Endothelial cell of umbilical vein (primary cell): ENCODE measurements at regions of chr10 and their contacts with region 1.

Region 1: GRCh38 chr10:102583435-102584417 is 60.6 kb upstream of the TRIM8 start:
- DNase-seq: peak; percentile 86
- H3K4me3 ChIP-seq: no peak overlapping the region
- H3K27ac ChIP-seq: no peak overlapping the region
- H3K4me1 ChIP-seq: peaks cover 16% of the 10 kb centered on the region
- H3K27me3 ChIP-seq: no peaks in the 10 kb centered on the region
- CTCF ChIP-seq: peak; percentile 78 to 79
- POLR2A ChIP-seq: no peak

Region 2: GRCh38 chr10:102394079-102394800 is 189.5 kb before region 1 on chr10:
- CTCF ChIA-PET with region 1: interaction called, 44 read pairs
- POLR2A ChIA-PET with region 1: no interaction called
- dilution Hi-C with region 1: no loop called
- intact Hi-C with region 1: loop called (anchors 2 kb)
- DNase-seq: peak; percentile 93
- H3K4me3 ChIP-seq: peak overlapping the region; percentile 4 to 60 (median 53)
- H3K27ac ChIP-seq: peak overlapping the region; percentile 87
- H3K4me1 ChIP-seq: peaks cover 14% of the 10 kb centered on the region
- H3K27me3 ChIP-seq: peaks cover 6% of the 10 kb centered on the region in 2 experiments
- CTCF ChIP-seq: no peak
- POLR2A ChIP-seq: no peak

Region 3: DNA sequence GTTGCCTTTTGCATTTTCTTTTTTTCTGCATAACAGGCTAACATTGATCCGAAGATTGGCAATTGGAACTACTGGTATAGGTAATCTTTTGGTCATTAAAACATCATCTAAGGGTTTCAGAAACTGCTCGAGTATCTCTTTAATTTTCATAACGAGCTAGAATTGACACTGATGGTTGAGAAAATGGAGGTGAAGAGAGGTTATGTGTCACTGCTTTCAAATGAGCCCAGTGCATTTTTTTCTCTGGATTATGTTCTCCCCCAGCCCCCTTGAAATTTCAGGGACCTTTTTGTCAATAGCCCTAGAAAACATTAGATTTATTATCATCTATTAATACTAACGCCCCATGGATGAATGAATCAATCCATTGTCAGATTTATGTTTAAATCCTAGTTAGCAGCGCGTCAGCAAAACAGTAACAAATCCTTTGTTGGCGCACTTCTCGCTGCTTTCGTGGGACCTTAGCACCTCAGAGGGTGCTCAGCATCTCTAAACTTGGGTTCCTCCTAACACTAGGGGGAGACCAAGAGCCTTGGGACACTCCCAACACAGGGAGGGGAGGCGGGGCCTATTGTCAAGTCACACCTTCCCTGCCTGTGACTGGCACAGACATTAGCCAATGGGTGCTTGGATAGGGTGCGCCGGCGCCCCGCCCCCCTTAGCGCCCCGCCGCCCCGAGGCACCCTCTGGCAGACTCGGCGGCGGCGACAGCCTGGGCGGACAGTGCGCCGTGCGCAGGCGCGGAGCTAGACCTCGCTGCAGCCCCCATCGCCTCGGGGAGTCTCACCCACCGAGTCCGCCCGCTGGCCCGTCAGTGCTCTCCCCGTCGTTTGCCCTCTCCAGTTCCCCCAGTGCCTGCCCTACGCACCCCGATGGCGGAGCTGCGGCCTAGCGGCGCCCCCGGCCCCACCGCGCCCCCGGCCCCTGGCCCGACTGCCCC is 80.2 kb before region 1 on chr10 and contains the start of gene SUFU:
- CTCF ChIA-PET with region 1: interaction called, 261 read pairs
- POLR2A ChIA-PET with region 1: interaction called, 4 read pairs
- dilution Hi-C with region 1: no loop called
- intact Hi-C with region 1: loop called (anchors 1 kb)
- DNase-seq: peak; percentile 99
- H3K4me3 ChIP-seq: peak within 1 kb of the TSS; percentile 68 to 87 (median 76)
- H3K27ac ChIP-seq: peak within 1 kb of the TSS; percentile 52
- H3K4me1 ChIP-seq: peaks cover 16% of the 10 kb centered on the region
- H3K27me3 ChIP-seq: no peaks in the 10 kb centered on the region
- CTCF ChIP-seq: peak; percentile 89 to 91
- POLR2A ChIP-seq: peak; percentile 86
- total RNA-seq, gene SUFU: 14.5 and 16.3 TPM in 2 replicates

Region 4: DNA sequence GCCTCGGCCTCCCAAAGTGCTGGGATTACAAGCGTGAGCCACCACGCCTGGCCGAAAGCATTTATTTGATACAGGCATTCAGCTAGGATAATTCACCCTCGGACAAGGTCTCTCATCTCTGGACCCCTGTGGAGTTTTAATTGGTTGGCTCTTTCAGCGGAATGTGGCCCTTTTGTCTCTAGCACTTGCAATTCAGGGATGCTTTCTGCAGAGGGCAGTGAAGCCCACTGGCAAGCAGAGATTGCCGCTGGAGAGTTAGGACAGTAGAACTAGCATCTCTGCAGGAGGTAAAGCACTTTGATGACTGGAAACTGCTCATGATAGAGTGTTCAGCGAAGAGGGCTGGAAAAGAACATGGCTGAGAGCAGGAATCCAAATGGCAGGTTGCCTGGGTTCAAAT is 17.9 kb before region 1 on chr10:
- CTCF ChIA-PET with region 1: interaction called, 11 read pairs
- POLR2A ChIA-PET with region 1: no interaction called
- dilution Hi-C with region 1: no loop called
- intact Hi-C with region 1: no loop called
- DNase-seq: no peak
- H3K4me3 ChIP-seq: no peak overlapping the region
- H3K27ac ChIP-seq: no peak overlapping the region
- H3K4me1 ChIP-seq: no peaks in the 10 kb centered on the region
- H3K27me3 ChIP-seq: no peaks in the 10 kb centered on the region
- CTCF ChIP-seq: no peak
- POLR2A ChIP-seq: no peak

Region 5: GRCh38 chr10:102641880-102642735 is 58.4 kb after region 1 on chr10:
- CTCF ChIA-PET with region 1: interaction called, 16 read pairs
- POLR2A ChIA-PET with region 1: interaction called, 3 read pairs
- dilution Hi-C with region 1: no loop called
- intact Hi-C with region 1: no loop called
- DNase-seq: peak; percentile 98
- H3K4me3 ChIP-seq: peak overlapping the region; percentile 56 to 86 (median 69)
- H3K27ac ChIP-seq: peak overlapping the region; percentile 86
- H3K4me1 ChIP-seq: peaks cover 12% of the 10 kb centered on the region
- H3K27me3 ChIP-seq: no peaks in the 10 kb centered on the region
- CTCF ChIP-seq: no peak
- POLR2A ChIP-seq: peak; percentile 73

Region 6: DNA sequence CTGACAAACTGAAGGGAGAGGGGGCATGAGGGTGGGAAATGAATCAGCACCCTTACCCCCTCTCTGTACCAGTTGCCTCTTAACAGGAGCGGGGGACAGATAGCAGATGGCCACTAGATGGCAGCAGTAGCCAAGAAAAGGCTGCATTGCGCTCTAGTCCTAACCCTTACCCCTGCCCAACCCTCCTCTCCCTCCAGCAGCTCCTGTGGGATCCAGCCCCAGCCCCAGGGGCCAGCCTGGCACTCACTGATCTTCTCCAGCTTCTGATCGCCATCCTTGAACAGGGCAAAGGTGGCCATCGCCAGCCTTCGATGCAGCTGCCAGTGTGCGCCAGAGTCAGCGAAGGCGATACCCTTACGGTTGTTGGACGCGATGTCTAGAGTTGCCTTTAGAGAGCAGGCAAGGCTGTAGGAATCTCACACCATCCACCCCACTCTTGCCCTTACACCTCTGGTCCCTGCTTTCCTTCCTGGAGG is 251.3 kb after region 1 on chr10:
- CTCF ChIA-PET with region 1: no interaction called
- POLR2A ChIA-PET with region 1: no interaction called
- dilution Hi-C with region 1: no loop called
- intact Hi-C with region 1: no loop called
- DNase-seq: peak; percentile 80
- H3K4me3 ChIP-seq: no peak overlapping the region
- H3K27ac ChIP-seq: no peak overlapping the region
- H3K4me1 ChIP-seq: no peaks in the 10 kb centered on the region
- H3K27me3 ChIP-seq: peaks cover 0 to 4% of the 10 kb centered on the region in 2 experiments
- CTCF ChIP-seq: peak; percentile 82 to 85
- POLR2A ChIP-seq: no peak